Naive thymus-derived CD4-positive, alpha-beta T cell (primary cell): ENCODE measurements at regions of chr1 and their contacts with region 1.

Region 1: GRCh38 chr1:46927249-46927835 is 13.9 kb downstream of the CYP4A11 start:
- DNase-seq: no peak
- ATAC-seq: no peak
- H3K4me3 ChIP-seq: no peak overlapping the region
- H3K4me3 Mint-ChIP-seq: no peak overlapping the region
- H3K27ac ChIP-seq: no peak overlapping the region
- H3K27ac Mint-ChIP-seq: no peak overlapping the region
- H3K4me1 ChIP-seq: no peaks in the 10 kb centered on the region
- H3K4me1 Mint-ChIP-seq: no peaks in the 10 kb centered on the region
- H3K27me3 ChIP-seq: no peaks in the 10 kb centered on the region
- H3K27me3 Mint-ChIP-seq: peaks cover 10 to 65% (median 47%) of the 10 kb centered on the region in 5 donors

Region 2: GRCh38 chr1:47002211-47002610 is 74.9 kb after region 1 on chr1:
- CTCF ChIA-PET with region 1: no interaction called
- POLR2A ChIA-PET with region 1: no interaction called
- intact Hi-C with region 1: no loop called
- DNase-seq: no peak
- ATAC-seq: no peak
- H3K4me3 ChIP-seq: no peak overlapping the region
- H3K4me3 Mint-ChIP-seq: no peak overlapping the region
- H3K27ac ChIP-seq: no peak overlapping the region
- H3K27ac Mint-ChIP-seq: no peak overlapping the region
- H3K4me1 ChIP-seq: no peaks in the 10 kb centered on the region
- H3K4me1 Mint-ChIP-seq: no peaks in the 10 kb centered on the region
- H3K27me3 ChIP-seq: no peaks in the 10 kb centered on the region
- H3K27me3 Mint-ChIP-seq: peaks cover 16 to 67% (median 60%) of the 10 kb centered on the region in 5 donors

Region 3: GRCh38 chr1:47147047-47147785 is 219.9 kb after region 1 on chr1:
- CTCF ChIA-PET with region 1: no interaction called
- POLR2A ChIA-PET with region 1: no interaction called
- intact Hi-C with region 1: loop called in 1 of 2 experiments (anchors 5 kb)
- DNase-seq: no peak
- ATAC-seq: no peak
- H3K4me3 ChIP-seq: no peak overlapping the region
- H3K4me3 Mint-ChIP-seq: no peak overlapping the region
- H3K27ac ChIP-seq: no peak overlapping the region
- H3K27ac Mint-ChIP-seq: no peak overlapping the region
- H3K4me1 ChIP-seq: no peaks in the 10 kb centered on the region
- H3K4me1 Mint-ChIP-seq: no peaks in the 10 kb centered on the region
- H3K27me3 ChIP-seq: no peaks in the 10 kb centered on the region
- H3K27me3 Mint-ChIP-seq: peaks cover 0 to 47% (median 26%) of the 10 kb centered on the region in 5 donors